ENCODE measurements at regions of chr18 and their contacts with region 1.

Region 1: GRCh38 chr18:71784777-71785176 is 759.4 kb downstream of the CBLN2 start:
- DNase-seq: peak; percentile 2 to 12 (median 4)
- ATAC-seq: no peak
- H3K4me3 ChIP-seq: no peak overlapping the region
- H3K27ac ChIP-seq: no peak overlapping the region
- H3K4me1 ChIP-seq: no peaks in the 10 kb centered on the region
- H3K27me3 ChIP-seq: no peaks in the 10 kb centered on the region
- CTCF ChIP-seq: peak in 1 of 3 experiments; percentile 18; a peak in 1 of 6 replicates
- EP300 ChIP-seq: no peak
- POLR2A ChIP-seq: no peak
- RAD21 ChIP-seq: peak in 1 of 2 experiments; percentile 9; a peak in 1 of 4 replicates

Region 2: GRCh38 chr18:70491734-70492348 is 1292.9 kb before region 1 on chr18:
- CTCF ChIA-PET with region 1: no interaction called
- POLR2A ChIA-PET with region 1: no interaction called
- in situ Hi-C with region 1: no loop called
- intact Hi-C with region 1: loop called (anchors 10 kb)
- DNase-seq: peak; percentile 30 to 57 (median 44)
- ATAC-seq: peak; percentile 88
- H3K4me3 ChIP-seq: no peak overlapping the region
- H3K27ac ChIP-seq: no peak overlapping the region
- H3K4me1 ChIP-seq: no peaks in the 10 kb centered on the region
- H3K27me3 ChIP-seq: no peaks in the 10 kb centered on the region
- CTCF ChIP-seq: peak; percentile 64 to 69 (median 67)
- EP300 ChIP-seq: no peak
- POLR2A ChIP-seq: no peak
- RAD21 ChIP-seq: peak; percentile 14 to 56; a peak in 2 of 4 replicates

Region 3: GRCh38 chr18:71630686-71631085 is 154.1 kb before region 1 on chr18:
- CTCF ChIA-PET with region 1: no interaction called
- POLR2A ChIA-PET with region 1: no interaction called
- in situ Hi-C with region 1: no loop called
- intact Hi-C with region 1: loop called (anchors 10 kb)
- DNase-seq: no peak
- ATAC-seq: no peak
- H3K4me3 ChIP-seq: no peak overlapping the region
- H3K27ac ChIP-seq: no peak overlapping the region
- H3K4me1 ChIP-seq: no peaks in the 10 kb centered on the region
- H3K27me3 ChIP-seq: no peaks in the 10 kb centered on the region
- CTCF ChIP-seq: no peak
- EP300 ChIP-seq: no peak
- POLR2A ChIP-seq: no peak
- RAD21 ChIP-seq: no peak